GM13977 (cell line): ENCODE measurements at regions of chr2 and their contacts with region 1.

Region 1: GRCh38 chr2:164061129-164061746 is 325.4 kb upstream of the FIGN start:
- DNase-seq: peak; percentile 27
- CTCF ChIP-seq: peak; percentile 81

Region 2: GRCh38 chr2:163191372-163191771 is 869.9 kb before region 1 on chr2:
- in situ Hi-C with region 1: loop called (anchors 25 kb)
- DNase-seq: peak; percentile 14
- CTCF ChIP-seq: peak; percentile 48

Region 3: DNA sequence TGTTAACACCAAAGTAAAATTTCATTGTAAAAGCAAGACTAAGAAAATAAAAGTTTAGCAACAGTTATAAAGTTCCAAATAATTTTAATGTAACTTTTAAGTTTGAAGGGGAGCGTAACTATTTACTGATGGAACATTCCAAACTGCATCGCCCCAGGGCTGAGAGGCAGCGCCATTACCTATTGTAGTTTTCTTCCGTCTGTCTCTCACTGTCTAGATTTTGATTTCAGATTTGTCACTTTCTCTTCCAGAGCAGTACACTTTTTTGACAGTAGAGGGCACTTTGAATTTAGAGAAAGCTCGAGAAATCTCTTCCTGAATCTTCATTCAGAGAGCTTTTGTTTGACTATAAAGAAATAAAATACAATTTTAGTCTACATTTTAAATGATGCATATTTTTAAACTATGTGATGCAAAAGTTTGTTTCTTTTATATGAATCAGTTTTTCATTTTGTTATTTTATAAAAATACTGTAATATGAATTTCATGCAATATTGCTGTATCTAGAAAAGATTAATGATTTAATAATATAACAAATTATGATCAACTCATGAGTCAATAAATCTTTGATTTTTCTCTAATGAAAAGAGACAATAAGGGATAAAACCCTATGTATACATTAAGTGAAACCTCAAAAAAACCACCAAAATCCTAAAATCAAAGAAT is 715.2 kb before region 1 on chr2:
- in situ Hi-C with region 1: loop called (anchors 25 kb)
- DNase-seq: peak; percentile 62
- CTCF ChIP-seq: peak; percentile 71

Region 4: DNA sequence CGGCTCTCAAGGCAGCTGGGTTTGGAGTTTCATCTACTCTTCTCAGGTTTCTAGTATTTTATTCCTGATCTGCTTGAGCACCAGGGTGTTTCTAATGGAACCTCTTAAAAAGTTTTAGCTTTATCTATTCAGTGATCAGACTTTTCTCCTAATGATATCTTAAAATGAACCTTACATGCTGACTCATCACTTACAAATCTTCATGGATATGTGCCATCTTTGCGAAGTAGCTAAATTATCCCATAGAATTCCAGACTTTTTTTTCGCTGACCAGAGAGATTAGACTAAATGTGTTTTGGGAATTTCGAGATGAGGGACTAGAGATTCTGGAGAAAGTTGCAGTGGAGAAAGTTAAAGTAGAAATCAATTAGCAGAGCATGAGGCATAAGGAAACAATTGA is 159.0 kb after region 1 on chr2:
- in situ Hi-C with region 1: no loop called
- DNase-seq: no peak
- CTCF ChIP-seq: no peak